Uterus (tissue), 4 donors: ENCODE measurements at regions of chr18 and their contacts with region 1.

Region 1: GRCh38 chr18:48445540-48445939 is 36.4 kb upstream of the ZBTB7C start:
- DNase-seq: peak; percentile 53 to 56
- H3K4me3 ChIP-seq: no peak overlapping the region
- H3K27ac ChIP-seq: no peak overlapping the region
- H3K4me1 ChIP-seq: no peaks in the 10 kb centered on the region
- H3K27me3 ChIP-seq: no peaks in the 10 kb centered on the region
- CTCF ChIP-seq: peak; percentile 30 to 61 (median 58)
- POLR2A ChIP-seq: no peak

Region 2: GRCh38 chr18:47701133-47701532 is 744.4 kb before region 1 on chr18:
- intact Hi-C with region 1: no loop called
- DNase-seq: no peak
- H3K4me3 ChIP-seq: no peak overlapping the region
- H3K27ac ChIP-seq: no peak overlapping the region
- H3K4me1 ChIP-seq: no peaks in the 10 kb centered on the region
- H3K27me3 ChIP-seq: no peaks in the 10 kb centered on the region
- CTCF ChIP-seq: no peak
- POLR2A ChIP-seq: no peak

Region 3: DNA sequence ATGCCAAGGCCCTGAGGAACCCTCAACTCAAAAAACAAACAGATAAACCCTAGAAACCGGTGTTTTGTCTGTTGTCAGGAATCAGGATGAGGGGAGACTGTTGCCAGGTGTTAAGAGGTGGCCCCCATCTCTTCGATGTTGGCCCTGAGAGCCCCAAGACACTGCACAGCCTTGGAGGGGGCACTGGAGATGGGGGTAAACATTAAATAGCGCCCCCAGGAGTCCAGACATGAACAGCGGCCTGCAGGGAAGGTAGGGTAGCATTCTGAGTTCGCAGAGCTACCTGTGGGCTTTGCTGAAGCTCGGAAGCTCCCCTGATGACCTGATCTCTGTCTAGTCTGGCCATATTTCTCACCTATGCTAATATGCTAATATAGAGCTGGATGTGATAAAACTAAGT is 417.5 kb before region 1 on chr18:
- intact Hi-C with region 1: loop called (anchors 2 kb)
- DNase-seq: no peak
- H3K4me3 ChIP-seq: no peak overlapping the region
- H3K27ac ChIP-seq: no peak overlapping the region
- H3K4me1 ChIP-seq: no peaks in the 10 kb centered on the region
- H3K27me3 ChIP-seq: no peaks in the 10 kb centered on the region
- CTCF ChIP-seq: no peak
- POLR2A ChIP-seq: no peak

Region 4: DNA sequence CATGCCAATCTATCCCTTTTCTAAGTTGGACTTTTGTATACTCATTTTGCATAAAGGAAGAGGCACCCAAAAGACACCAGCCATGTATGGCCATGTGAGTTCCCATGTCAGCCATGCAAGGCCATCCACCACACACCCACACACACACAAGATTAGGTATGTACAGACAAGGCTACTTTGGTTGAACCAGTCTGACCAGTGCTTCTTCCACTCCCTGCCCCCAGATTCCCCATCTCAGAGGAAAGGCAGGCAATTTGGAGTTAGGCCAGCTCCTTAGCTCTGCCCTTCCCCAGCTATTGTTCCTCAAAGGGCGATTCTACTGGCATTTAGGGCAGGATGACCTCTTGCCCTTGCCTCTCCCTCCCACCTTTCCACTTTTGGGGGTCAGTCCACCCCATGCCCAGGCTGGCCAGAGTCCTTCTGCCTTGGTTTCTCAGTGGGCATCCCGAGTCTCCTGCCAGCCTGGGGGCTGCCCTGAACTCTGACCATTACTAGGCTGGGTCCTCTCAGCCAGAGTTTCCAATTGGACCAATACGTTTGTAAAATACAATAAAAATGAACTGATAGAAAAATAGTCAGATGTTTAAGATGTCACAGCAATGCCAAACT is 137.4 kb before region 1 on chr18:
- intact Hi-C with region 1: no loop called
- DNase-seq: no peak
- H3K4me3 ChIP-seq: no peak overlapping the region
- H3K27ac ChIP-seq: no peak overlapping the region
- H3K4me1 ChIP-seq: no peaks in the 10 kb centered on the region
- H3K27me3 ChIP-seq: no peaks in the 10 kb centered on the region
- CTCF ChIP-seq: no peak
- POLR2A ChIP-seq: no peak